Mammary epithelial cell (primary cell): ENCODE measurements at regions of chr12 and their contacts with region 1.

Region 1: DNA sequence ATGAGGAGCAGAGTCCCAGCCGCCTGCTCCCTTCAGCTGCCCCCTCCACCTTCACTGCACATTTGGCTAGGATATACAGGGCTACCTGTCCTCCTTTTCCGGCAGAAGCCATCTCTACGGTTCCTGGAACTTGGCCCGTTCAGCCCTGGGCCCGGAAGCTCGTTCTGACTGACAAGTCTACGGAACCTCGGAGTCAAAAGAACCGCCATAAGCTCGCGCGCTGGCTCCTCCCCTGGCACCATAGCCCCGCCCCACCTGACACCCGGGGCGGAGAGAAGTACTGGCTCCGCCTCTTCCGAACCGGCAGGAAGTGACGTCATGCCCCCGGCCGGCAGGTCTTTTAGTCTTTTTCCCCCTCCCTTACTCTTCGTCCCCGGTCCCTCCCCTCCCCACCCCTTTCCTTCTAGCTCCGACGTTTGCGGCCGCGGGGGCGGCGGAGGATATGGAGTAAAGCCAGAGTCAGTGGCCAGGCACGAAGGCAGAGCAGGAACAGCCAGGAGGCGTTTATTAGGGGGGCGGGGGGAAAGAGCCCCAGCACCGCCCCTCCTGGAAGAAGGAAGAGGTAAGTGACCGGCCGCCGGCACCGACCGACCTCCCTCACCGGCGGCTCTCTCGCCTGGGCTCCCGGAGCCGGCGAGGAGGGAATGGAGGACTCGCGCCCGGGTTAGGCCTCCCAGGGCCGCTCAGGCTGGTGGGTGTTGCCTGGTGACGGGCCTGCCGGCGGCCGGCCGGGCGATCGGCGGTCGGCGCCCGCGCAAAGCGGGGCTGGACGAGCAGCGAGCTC is at the starts of genes DEPDC4 and SCYL2:
- DNase-seq: peak; percentile 99
- H3K4me3 ChIP-seq: peak within 1 kb of the TSS; percentile 75 to 88 (median 84)
- H3K27ac ChIP-seq: peak within 1 kb of the TSS; percentile 94
- H3K4me1 ChIP-seq: peaks cover 12% of the 10 kb centered on the region
- H3K27me3 ChIP-seq: no peaks in the 10 kb centered on the region
- CTCF ChIP-seq: no peak
- total RNA-seq, gene DEPDC4: 0.83 to 2.4 TPM
- total RNA-seq, gene SCYL2: 56.6 to 58.7 TPM

Region 2: DNA sequence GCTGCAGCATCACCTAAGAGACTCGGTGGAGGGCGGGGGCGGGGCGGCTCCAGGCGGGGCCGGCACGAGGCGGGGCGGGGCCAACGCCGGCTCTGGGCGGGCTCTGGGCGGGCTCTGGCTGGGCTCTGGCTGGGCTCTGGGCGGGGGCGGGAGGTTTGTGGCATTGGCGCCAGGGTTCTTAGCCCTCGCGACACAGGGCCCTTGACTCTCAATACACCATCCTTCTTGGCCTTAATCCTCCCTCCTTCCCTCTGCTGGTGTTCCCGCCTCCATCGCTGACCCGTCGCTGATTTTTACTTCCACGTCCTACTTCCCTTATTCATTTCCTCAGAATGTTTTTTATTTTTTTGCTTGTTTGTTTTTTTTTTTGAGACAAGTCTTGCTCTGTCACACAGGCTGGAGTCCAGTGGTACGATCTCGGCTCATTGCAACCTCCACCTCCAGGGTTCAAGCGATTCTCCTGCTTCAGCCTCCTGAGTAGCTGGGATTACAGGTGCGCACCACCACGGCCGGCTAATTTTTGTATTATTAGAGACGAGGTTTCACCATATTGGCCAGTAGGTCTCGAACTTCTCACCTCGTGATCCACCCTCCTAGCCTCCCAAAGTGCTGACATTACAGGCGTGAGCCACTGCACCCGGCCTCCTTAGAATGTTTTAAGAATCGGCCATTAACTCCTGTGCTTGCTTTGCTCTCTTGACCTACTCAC is 124.0 kb before region 1 on chr12 and contains the start of gene BLTP3B:
- CTCF ChIA-PET with region 1: no interaction called
- dilution Hi-C with region 1: no loop called
- in situ Hi-C with region 1: no loop called
- intact Hi-C with region 1: loop called (anchors 5 kb)
- DNase-seq: peak; percentile 69
- H3K4me3 ChIP-seq: peak within 1 kb of the TSS; percentile 92 to 99 (median 99)
- H3K27ac ChIP-seq: peak within 1 kb of the TSS; percentile 93
- H3K4me1 ChIP-seq: peaks cover 9% of the 10 kb centered on the region
- H3K27me3 ChIP-seq: no peaks in the 10 kb centered on the region
- CTCF ChIP-seq: no peak
- total RNA-seq, gene BLTP3B: 18.8 to 30.2 TPM

Region 3: GRCh38 chr12:100311317-100311716 is 44.3 kb after region 1 on chr12:
- CTCF ChIA-PET with region 1: interaction called, 5 read pairs
- dilution Hi-C with region 1: no loop called
- in situ Hi-C with region 1: no loop called
- intact Hi-C with region 1: loop called (anchors 5 kb)
- DNase-seq: no peak
- H3K4me3 ChIP-seq: no peak overlapping the region
- H3K27ac ChIP-seq: no peak overlapping the region
- H3K4me1 ChIP-seq: no peaks in the 10 kb centered on the region
- H3K27me3 ChIP-seq: no peaks in the 10 kb centered on the region
- CTCF ChIP-seq: no peak

Region 4: GRCh38 chr12:100741084-100741711 is 474.2 kb after region 1 on chr12:
- CTCF ChIA-PET with region 1: interaction called, 22 read pairs
- dilution Hi-C with region 1: no loop called
- in situ Hi-C with region 1: no loop called
- intact Hi-C with region 1: no loop called
- DNase-seq: peak; percentile 26
- H3K4me3 ChIP-seq: no peak overlapping the region
- H3K27ac ChIP-seq: no peak overlapping the region
- H3K4me1 ChIP-seq: no peaks in the 10 kb centered on the region
- H3K27me3 ChIP-seq: no peaks in the 10 kb centered on the region
- CTCF ChIP-seq: peak; percentile 74 to 83